Activated CD8-positive, alpha-beta T cell treated with anti-CD3 and anti-CD28 coated beads for 36 hours (primary cell): ENCODE measurements at regions of chr17 and their contacts with region 1.

Region 1: GRCh38 chr17:62968445-62968923 is 2.4 kb downstream of the TANC2 start:
- DNase-seq: peak; percentile 66
- ATAC-seq: peak; percentile 56
- H3K4me3 Mint-ChIP-seq: peak overlapping the region; percentile 25
- H3K27ac Mint-ChIP-seq: no peak overlapping the region
- H3K4me1 Mint-ChIP-seq: peaks cover 29% of the 10 kb centered on the region
- H3K27me3 Mint-ChIP-seq: peaks cover 10% of the 10 kb centered on the region
- CTCF ChIP-seq: peak; percentile 86

Region 2: GRCh38 chr17:62703775-62704378 is 264.6 kb before region 1 on chr17:
- CTCF ChIA-PET with region 1: interaction called, 4 read pairs
- POLR2A ChIA-PET with region 1: interaction called, 3 read pairs
- intact Hi-C with region 1: loop called (anchors 1 kb)
- DNase-seq: peak; percentile 64
- ATAC-seq: peak; percentile 86
- H3K4me3 Mint-ChIP-seq: peak overlapping the region; percentile 40
- H3K27ac Mint-ChIP-seq: no peak overlapping the region
- H3K4me1 Mint-ChIP-seq: peaks cover 17% of the 10 kb centered on the region
- H3K27me3 Mint-ChIP-seq: peaks cover 24% of the 10 kb centered on the region
- CTCF ChIP-seq: peak; percentile 90

Region 3: GRCh38 chr17:62724398-62725146 is 243.9 kb before region 1 on chr17:
- CTCF ChIA-PET with region 1: interaction called, 7 read pairs
- POLR2A ChIA-PET with region 1: interaction called, 3 read pairs
- intact Hi-C with region 1: loop called (anchors 5 kb)
- DNase-seq: peak; percentile 95
- ATAC-seq: peak; percentile 96
- H3K4me3 Mint-ChIP-seq: peak overlapping the region; percentile 6
- H3K27ac Mint-ChIP-seq: peak overlapping the region; percentile 47
- H3K4me1 Mint-ChIP-seq: peaks cover 29% of the 10 kb centered on the region
- H3K27me3 Mint-ChIP-seq: peaks cover 41% of the 10 kb centered on the region
- CTCF ChIP-seq: no peak